ENCODE measurements at regions of chr19 and their contacts with region 1.

Region 1: GRCh38 chr19:7680606-7681339 is at the start of gene TRAPPC5:
- DNase-seq: peak; percentile 80 to 95 (median 89)
- ATAC-seq: peak; percentile 86
- H3K4me3 ChIP-seq: peak within 1 kb of the TSS; percentile 84
- H3K4me3 Mint-ChIP-seq: peak within 1 kb of the TSS; percentile 83 to 96 (median 91)
- H3K27ac ChIP-seq: peak within 1 kb of the TSS; percentile 91
- H3K27ac Mint-ChIP-seq: peak within 1 kb of the TSS; percentile 54 to 95 (median 93)
- H3K4me1 ChIP-seq: peaks cover 26 to 32% of the 10 kb centered on the region in 2 donors
- H3K4me1 Mint-ChIP-seq: peaks cover 20 to 59% (median 46%) of the 10 kb centered on the region in 7 donors
- H3K27me3 ChIP-seq: peaks cover 0 to 6% of the 10 kb centered on the region in 2 donors
- H3K27me3 Mint-ChIP-seq: peaks cover 3 to 22% (median 8%) of the 10 kb centered on the region in 5 donors
- total RNA-seq, gene TRAPPC5: 43.7 to 79.3 (median 75.4) TPM

Region 2: GRCh38 chr19:7355151-7355820 is 325.5 kb before region 1 on chr19:
- CTCF ChIA-PET with region 1: no interaction called
- POLR2A ChIA-PET with region 1: no interaction called
- intact Hi-C with region 1: loop called in 1 of 2 experiments (anchors 2 kb)
- DNase-seq: no peak
- ATAC-seq: no peak
- H3K4me3 ChIP-seq: no peak overlapping the region
- H3K4me3 Mint-ChIP-seq: peak overlapping the region in 6 of 10 donors; percentile 47 to 99 (median 86)
- H3K27ac ChIP-seq: no peak overlapping the region
- H3K27ac Mint-ChIP-seq: peak overlapping the region in 8 of 9 donors; percentile 80 to 94 (median 88)
- H3K4me1 ChIP-seq: peaks cover 27 to 54% of the 10 kb centered on the region in 2 donors
- H3K4me1 Mint-ChIP-seq: peaks cover 49 to 95% (median 71%) of the 10 kb centered on the region in 7 donors
- H3K27me3 ChIP-seq: no peaks in the 10 kb centered on the region
- H3K27me3 Mint-ChIP-seq: no peaks in the 10 kb centered on the region

Region 3: GRCh38 chr19:7629347-7630054 is 51.3 kb before region 1 on chr19 and contains the starts of genes PET100 and XAB2:
- CTCF ChIA-PET with region 1: interaction called, 3 read pairs
- POLR2A ChIA-PET with region 1: interaction called, 10 read pairs
- intact Hi-C with region 1: loop called (anchors 1 to 2 kb)
- DNase-seq: peak; percentile 81 to 97 (median 95)
- ATAC-seq: peak; percentile 97
- H3K4me3 ChIP-seq: peak within 1 kb of the TSS; percentile 89
- H3K4me3 Mint-ChIP-seq: peak within 1 kb of the TSS; percentile 87 to 100 (median 98)
- H3K27ac ChIP-seq: peak within 1 kb of the TSS; percentile 92
- H3K27ac Mint-ChIP-seq: peak within 1 kb of the TSS; percentile 96 to 100 (median 99)
- H3K4me1 ChIP-seq: peaks cover 19 to 21% of the 10 kb centered on the region in 2 donors
- H3K4me1 Mint-ChIP-seq: peaks cover 25 to 57% (median 38%) of the 10 kb centered on the region in 7 donors
- H3K27me3 ChIP-seq: no peaks in the 10 kb centered on the region
- H3K27me3 Mint-ChIP-seq: no peaks in the 10 kb centered on the region
- total RNA-seq, gene PET100: 112 to 134 (median 117) TPM
- total RNA-seq, gene XAB2: 49.3 to 79.8 (median 76.4) TPM

Region 4: DNA sequence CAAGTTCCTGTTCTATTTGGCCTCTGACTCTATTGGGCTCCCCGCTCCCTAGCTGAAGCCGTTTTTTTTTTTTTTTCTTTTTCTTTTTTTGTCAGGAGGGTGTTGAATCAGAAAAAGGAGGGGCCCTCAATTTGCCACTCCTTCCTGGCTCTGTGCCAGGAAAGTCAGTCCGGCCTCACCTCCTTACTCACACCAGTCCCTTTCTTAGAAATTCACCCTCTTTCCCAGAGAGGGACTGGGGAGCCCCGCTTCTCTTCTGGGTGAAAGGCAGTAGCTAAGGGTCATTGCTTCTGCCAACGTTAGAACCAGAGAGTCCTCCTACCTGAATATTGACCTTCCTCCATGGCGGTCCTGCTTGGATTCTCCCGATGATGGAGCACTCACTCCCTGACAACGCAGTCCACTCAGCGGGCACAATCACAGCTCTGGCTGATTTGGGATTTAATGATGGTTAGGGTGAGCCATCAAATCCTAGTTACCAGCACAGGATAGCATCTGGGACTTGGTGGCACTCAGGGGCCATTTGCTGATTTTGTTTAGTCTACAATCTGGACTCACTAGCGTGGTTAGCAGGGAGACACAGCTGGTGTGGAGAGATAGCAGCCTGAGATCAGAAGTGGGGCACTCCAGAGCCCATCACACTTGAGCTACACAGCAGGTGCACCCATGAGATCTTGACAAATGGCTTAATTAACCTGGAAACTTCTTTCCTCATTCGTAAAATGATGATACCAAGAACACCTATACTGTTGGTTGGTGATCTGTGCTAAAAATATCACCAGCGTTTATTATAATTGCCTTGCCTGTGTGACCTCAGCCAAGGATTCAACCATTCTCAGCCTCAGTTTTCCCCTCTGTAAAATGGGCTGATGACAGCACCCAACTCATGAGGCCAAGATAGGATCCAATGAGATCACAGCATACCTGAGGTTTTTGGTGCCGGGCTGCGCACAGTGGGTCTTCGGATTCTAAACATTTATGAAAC is 18.9 kb after region 1 on chr19:
- CTCF ChIA-PET with region 1: interaction called, 11 read pairs
- POLR2A ChIA-PET with region 1: interaction called, 9 read pairs
- intact Hi-C with region 1: no loop called
- DNase-seq: no peak
- ATAC-seq: peak; percentile 26
- H3K4me3 ChIP-seq: no peak overlapping the region
- H3K4me3 Mint-ChIP-seq: no peak overlapping the region
- H3K27ac ChIP-seq: no peak overlapping the region
- H3K27ac Mint-ChIP-seq: peak overlapping the region in 5 of 9 donors; percentile 6 to 72 (median 50)
- H3K4me1 ChIP-seq: peaks cover 0 to 9% of the 10 kb centered on the region in 2 donors
- H3K4me1 Mint-ChIP-seq: peaks cover 3 to 39% (median 28%) of the 10 kb centered on the region in 7 donors
- H3K27me3 ChIP-seq: no peaks in the 10 kb centered on the region
- H3K27me3 Mint-ChIP-seq: peaks cover 0 to 40% (median 0%) of the 10 kb centered on the region in 5 donors

Region 5: GRCh38 chr19:7748770-7749209 is 68.0 kb after region 1 on chr19:
- CTCF ChIA-PET with region 1: no interaction called
- POLR2A ChIA-PET with region 1: no interaction called
- intact Hi-C with region 1: no loop called
- DNase-seq: no peak
- ATAC-seq: no peak
- H3K4me3 ChIP-seq: no peak overlapping the region
- H3K4me3 Mint-ChIP-seq: no peak overlapping the region
- H3K27ac ChIP-seq: no peak overlapping the region
- H3K27ac Mint-ChIP-seq: no peak overlapping the region
- H3K4me1 ChIP-seq: no peaks in the 10 kb centered on the region
- H3K4me1 Mint-ChIP-seq: peaks cover 5 to 15% (median 8%) of the 10 kb centered on the region in 7 donors
- H3K27me3 ChIP-seq: no peaks in the 10 kb centered on the region
- H3K27me3 Mint-ChIP-seq: peaks cover 0 to 17% (median 5%) of the 10 kb centered on the region in 5 donors

Region 6: DNA sequence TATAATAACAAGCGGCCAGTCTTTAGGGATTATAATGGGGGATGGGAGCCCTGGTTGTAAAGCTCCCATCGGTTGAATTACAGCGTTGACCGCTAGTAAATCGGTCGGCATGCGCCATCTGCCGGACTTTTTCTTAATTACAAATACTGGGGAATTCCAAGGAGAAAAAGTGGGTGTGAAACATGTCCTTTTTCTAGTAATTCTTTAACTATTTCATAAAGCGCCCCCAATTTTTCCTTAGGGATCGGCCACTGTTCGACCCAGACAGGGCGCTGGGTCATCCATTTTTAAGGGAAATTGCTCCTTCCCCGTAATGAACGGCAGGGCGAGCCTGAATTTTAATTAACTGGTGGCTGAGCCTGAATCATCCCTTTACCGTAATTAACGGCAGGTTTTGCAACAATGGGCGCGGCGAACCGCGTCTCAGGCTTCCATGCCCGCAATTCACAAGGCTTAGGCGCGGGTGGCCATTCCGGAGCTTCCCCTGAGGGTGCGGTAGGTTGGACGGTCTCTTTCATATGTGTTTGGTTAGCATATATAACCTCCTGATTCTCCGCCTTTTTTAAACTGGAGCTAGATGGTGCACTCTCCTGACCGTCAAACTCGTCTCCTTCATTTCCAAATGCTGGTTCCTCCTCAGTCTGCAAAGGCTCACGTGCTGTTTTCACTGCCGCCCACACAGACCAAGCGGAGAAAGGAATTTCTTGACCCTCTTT is 119.0 kb after region 1 on chr19:
- CTCF ChIA-PET with region 1: interaction called, 55 read pairs
- POLR2A ChIA-PET with region 1: interaction called, 14 read pairs
- intact Hi-C with region 1: loop called (anchors 1 kb)
- DNase-seq: peak; percentile 13 to 61 (median 39)
- ATAC-seq: peak; percentile 71
- H3K4me3 ChIP-seq: no peak overlapping the region
- H3K4me3 Mint-ChIP-seq: peak overlapping the region in 1 of 10 donors; percentile 23
- H3K27ac ChIP-seq: no peak overlapping the region
- H3K27ac Mint-ChIP-seq: peak overlapping the region in 1 of 9 donors; percentile 63
- H3K4me1 ChIP-seq: no peaks in the 10 kb centered on the region
- H3K4me1 Mint-ChIP-seq: peaks cover 0 to 8% (median 6%) of the 10 kb centered on the region in 7 donors
- H3K27me3 ChIP-seq: no peaks in the 10 kb centered on the region
- H3K27me3 Mint-ChIP-seq: peaks cover 0 to 44% (median 11%) of the 10 kb centered on the region in 5 donors

Region 7: DNA sequence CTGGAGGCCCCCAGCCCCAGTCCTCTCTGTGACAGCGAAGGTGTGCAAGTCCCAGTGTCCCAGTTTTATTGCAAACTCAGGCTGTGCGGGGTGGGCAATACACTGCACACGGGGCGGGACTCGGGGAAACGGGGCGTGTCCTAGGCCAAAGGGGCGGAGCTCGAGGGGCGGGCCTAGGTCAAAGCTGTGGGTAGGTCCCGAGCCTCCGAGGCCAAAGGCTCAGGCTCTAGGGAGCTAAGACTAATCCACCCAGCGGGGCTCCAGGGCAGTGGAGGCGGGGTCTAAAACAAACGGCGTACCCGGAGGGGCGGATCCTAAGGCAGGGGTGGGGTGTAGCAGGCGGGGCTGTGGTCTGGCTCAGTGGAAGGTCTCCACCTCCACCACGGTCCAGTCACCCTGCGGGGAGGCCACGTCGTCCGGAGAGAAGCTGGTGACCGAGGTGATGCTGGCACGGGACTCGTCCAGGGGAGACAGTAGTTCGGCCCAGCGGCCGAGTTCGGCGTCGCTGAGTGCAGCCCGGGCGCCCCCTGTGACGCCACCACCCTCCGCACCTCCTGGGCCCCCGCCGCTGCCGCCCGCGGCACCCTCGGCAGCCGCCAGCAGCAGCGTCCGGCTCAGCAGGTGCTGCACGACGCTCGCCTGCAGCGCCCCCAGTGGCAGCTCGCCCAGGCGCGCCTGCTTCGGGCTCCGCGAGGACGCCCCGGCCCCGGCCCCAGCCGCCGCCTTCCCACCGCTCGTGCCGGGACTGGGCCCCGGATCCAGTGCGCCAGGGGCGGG is 188.1 kb after region 1 on chr19:
- CTCF ChIA-PET with region 1: no interaction called
- POLR2A ChIA-PET with region 1: no interaction called
- intact Hi-C with region 1: loop called in 1 of 2 experiments (anchors 1 kb)
- DNase-seq: peak in 8 of 9 donors; percentile 51 to 95 (median 89)
- ATAC-seq: peak; percentile 83
- H3K4me3 ChIP-seq: peak overlapping the region; percentile 74
- H3K4me3 Mint-ChIP-seq: peak overlapping the region; percentile 69 to 87 (median 81)
- H3K27ac ChIP-seq: peak overlapping the region; percentile 69
- H3K27ac Mint-ChIP-seq: peak overlapping the region; percentile 34 to 90 (median 58)
- H3K4me1 ChIP-seq: peaks cover 12 to 19% of the 10 kb centered on the region in 2 donors
- H3K4me1 Mint-ChIP-seq: peaks cover 24 to 39% (median 36%) of the 10 kb centered on the region in 7 donors
- H3K27me3 ChIP-seq: peaks cover 0 to 2% of the 10 kb centered on the region in 2 donors
- H3K27me3 Mint-ChIP-seq: peaks cover 0 to 62% (median 8%) of the 10 kb centered on the region in 5 donors

Region 8: DNA sequence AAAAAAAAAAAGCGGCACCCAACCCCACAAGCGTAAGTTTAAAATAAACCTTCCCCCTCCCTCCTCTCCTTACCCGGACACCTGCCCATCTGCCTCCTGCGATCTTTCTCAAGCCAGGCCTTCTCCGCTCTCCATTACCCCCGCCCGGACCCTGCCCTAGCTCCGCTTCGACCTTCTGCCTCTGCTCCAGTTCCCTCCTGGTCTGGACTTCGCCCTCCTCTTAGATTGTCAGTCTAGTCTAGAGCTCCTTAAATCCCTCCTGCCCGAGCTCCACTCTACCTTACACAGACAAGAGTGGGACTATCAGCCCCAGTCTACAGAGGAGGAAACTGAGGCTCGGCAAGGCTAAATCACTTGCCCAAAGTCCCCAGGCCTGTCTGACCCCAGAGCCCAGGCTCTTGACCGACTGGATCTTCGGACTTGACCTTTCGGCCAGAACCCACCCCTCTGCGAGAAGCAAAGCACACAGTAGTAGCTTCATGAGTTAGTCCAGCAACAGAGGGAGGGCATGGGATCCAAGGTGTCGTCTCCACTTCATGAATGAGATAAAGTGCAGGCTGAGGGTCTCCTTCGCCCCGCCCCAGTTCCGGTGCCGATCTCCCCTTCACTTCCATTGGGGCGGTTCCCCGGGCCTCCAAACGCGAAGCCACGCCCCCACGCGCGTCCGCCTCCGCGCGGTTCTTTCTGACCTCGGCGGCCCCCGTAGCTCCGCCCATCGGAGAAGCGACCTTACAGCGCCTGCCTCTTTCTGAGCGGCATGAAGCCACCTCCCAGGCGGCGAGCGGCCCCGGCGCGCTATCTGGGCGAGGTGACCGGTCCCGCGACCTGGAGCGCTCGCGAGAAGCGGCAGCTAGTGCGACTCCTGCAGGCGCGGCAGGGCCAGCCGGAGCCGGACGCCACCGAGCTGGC is 239.1 kb after region 1 on chr19 and contains the start of gene SNAPC2:
- CTCF ChIA-PET with region 1: no interaction called
- POLR2A ChIA-PET with region 1: no interaction called
- intact Hi-C with region 1: loop called in 1 of 2 experiments (anchors 1 kb)
- DNase-seq: peak; percentile 95 to 99 (median 98)
- ATAC-seq: peak; percentile 71
- H3K4me3 ChIP-seq: peak within 1 kb of the TSS; percentile 86
- H3K4me3 Mint-ChIP-seq: peak within 1 kb of the TSS; percentile 88 to 97 (median 94)
- H3K27ac ChIP-seq: peak within 1 kb of the TSS; percentile 75
- H3K27ac Mint-ChIP-seq: peak within 1 kb of the TSS; percentile 76 to 97 (median 92)
- H3K4me1 ChIP-seq: peaks cover 25 to 34% of the 10 kb centered on the region in 2 donors
- H3K4me1 Mint-ChIP-seq: peaks cover 15 to 52% (median 38%) of the 10 kb centered on the region in 7 donors
- H3K27me3 ChIP-seq: peaks cover 3 to 20% of the 10 kb centered on the region in 2 donors
- H3K27me3 Mint-ChIP-seq: peaks cover 12 to 33% (median 14%) of the 10 kb centered on the region in 5 donors
- total RNA-seq, gene SNAPC2: 12.3 to 24.4 (median 21.4) TPM

Measured in naive thymus-derived CD4-positive, alpha-beta T cell (primary cell).